ENCODE measurements at regions of chr16 and their contacts with region 1.

Region 1: DNA sequence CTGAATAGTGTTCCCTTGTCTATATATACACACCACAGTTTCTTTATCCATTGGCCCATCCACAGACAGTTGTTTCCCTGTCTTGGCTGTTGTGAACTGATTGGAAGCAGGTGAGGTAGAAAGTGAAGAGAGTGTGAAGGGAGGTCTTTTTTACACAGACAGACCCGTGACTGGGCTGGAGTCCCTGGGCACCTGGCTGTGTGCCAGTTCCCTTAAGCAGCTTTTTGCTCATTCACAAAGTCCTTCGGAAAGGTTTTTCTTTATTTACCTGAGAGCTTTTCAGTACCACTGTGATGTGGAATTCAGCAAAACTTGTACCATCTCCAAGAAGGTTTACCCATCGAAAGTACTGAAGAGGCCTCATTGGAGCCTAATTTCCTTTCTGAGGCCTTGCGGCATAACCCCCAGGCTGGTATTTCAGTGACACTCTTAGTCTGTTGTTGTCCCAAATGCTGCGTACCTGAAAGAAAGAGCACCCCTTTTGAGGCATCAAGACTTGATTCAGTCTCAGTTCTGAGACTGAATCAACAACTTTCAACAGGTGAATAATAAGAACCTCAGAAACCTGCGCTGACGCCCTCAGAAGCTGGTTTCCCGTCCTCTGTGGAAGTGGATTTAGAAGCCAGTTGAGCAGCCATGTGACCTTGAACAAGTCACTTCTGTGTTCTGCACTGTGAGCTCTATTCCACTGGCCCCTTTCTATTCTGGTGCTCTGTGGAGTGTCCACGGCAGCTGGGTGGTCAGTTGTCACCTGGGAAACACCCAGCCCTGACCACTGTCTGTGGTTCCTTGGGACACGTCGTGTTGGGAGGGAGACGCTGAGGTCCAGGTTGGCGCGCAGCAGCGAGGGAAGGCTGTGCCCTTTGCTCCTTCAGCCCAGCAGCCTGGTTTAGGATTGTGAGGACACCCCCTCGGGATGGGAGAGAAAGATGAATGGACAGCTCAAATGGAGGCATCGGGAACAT is 53.9 kb upstream of the CRISPLD2 start:
- DNase-seq: peak in 5 of 14 experiments; percentile 18 to 50 (median 29)
- ATAC-seq: peak; percentile 65
- H3K4me3 ChIP-seq: no peak overlapping the region
- H3K4me3 Mint-ChIP-seq: peak overlapping the region; percentile 42
- H3K27ac ChIP-seq: peak overlapping the region; percentile 29 to 31
- H3K27ac Mint-ChIP-seq: peak overlapping the region; percentile 96
- H3K4me1 ChIP-seq: peaks cover 53% of the 10 kb centered on the region
- H3K4me1 Mint-ChIP-seq: peaks cover 65% of the 10 kb centered on the region
- H3K27me3 ChIP-seq: no peaks in the 10 kb centered on the region
- H3K27me3 Mint-ChIP-seq: no peaks in the 10 kb centered on the region
- CTCF ChIP-seq: no peak

Region 2: GRCh38 chr16:84952335-84953189 is 186.7 kb after region 1 on chr16:
- CTCF ChIA-PET with region 1: interaction called, 10 read pairs
- POLR2A ChIA-PET with region 1: no interaction called
- intact Hi-C with region 1: no loop called
- DNase-seq: peak; percentile 51 to 88 (median 62)
- ATAC-seq: peak; percentile 87
- H3K4me3 ChIP-seq: no peak overlapping the region
- H3K4me3 Mint-ChIP-seq: no peak overlapping the region
- H3K27ac ChIP-seq: no peak overlapping the region
- H3K27ac Mint-ChIP-seq: no peak overlapping the region
- H3K4me1 ChIP-seq: peaks cover 23% of the 10 kb centered on the region
- H3K4me1 Mint-ChIP-seq: peaks cover 11% of the 10 kb centered on the region
- H3K27me3 ChIP-seq: peaks cover 0 to 5% of the 10 kb centered on the region in 2 experiments
- H3K27me3 Mint-ChIP-seq: no peaks in the 10 kb centered on the region
- CTCF ChIP-seq: peak; percentile 88